Activated CD4-positive, alpha-beta T cell treated with anti-CD3 and anti-CD28 coated beads for 36 hours (primary cell): ENCODE measurements at regions of chr20 and their contacts with region 1.

Region 1: GRCh38 chr20:60851826-60852704 is 400.0 kb upstream of the CDH4 start:
- DNase-seq: peak; percentile 13
- ATAC-seq: no peak
- H3K4me3 Mint-ChIP-seq: no peak overlapping the region
- H3K27ac Mint-ChIP-seq: no peak overlapping the region
- H3K4me1 Mint-ChIP-seq: no peaks in the 10 kb centered on the region
- H3K27me3 Mint-ChIP-seq: peaks cover 2% of the 10 kb centered on the region

Region 2: DNA sequence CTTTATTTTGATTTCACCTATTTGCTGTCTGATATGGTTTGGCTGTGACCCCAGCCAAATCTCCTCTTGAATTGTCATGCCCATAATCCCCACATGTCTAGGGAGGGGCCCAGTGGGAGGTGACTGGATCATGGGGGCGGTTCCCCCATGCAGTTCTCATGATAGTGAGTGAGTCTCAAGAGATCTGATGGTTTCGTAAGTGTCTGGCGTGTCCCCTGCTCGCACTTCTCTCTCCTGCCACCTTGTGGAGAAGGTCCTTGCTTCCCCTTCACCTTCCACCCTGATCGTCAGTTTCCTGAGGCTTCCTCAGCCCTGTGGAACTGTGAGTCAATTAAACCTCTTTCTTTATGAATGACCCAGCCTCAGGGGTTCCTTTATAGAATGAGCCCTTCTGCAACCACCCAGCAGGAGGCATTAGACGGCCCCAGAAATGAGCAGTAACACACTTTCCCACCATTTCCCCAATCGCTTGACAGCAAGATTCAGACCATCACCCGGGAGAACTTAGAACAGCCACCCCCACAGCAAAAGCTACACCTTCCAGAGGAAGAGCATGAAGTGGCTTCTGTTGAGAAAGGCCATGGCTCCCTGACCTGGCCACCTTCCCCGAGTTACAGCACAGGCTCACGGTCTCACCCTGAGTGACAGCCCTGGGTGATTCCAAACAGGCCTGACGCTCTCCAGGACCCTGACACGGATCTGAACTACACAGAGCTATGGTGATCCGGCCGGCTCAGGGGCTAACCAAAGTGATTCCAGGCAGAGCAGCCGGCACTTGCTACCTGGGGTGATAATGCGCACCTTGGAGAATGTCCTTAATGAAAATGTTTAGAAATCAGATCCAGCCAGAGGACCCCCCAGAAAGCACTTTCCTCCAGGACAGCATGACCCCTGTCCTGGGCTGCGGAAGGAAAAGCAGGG is 268.8 kb after region 1 on chr20:
- CTCF ChIA-PET with region 1: interaction called, 3 read pairs
- POLR2A ChIA-PET with region 1: no interaction called
- intact Hi-C with region 1: loop called in 1 of 2 experiments (anchors 2 kb)
- DNase-seq: peak; percentile 68
- ATAC-seq: peak; percentile 95
- H3K4me3 Mint-ChIP-seq: no peak overlapping the region
- H3K27ac Mint-ChIP-seq: no peak overlapping the region
- H3K4me1 Mint-ChIP-seq: peaks cover 5% of the 10 kb centered on the region
- H3K27me3 Mint-ChIP-seq: peaks cover 3% of the 10 kb centered on the region